Activated CD4-positive, alpha-beta memory T cell treated with anti-CD3 and anti-CD28 coated beads, Interleukin-2, amount 10 ng/mL, durations not matched to agents 7 days and 5 days (primary cell): ENCODE measurements at regions of chr9 and their contacts with region 1.

Region 1: GRCh38 chr9:127734747-127735529 is at the start of gene TOR2A:
- DNase-seq: peak; percentile 98
- H3K4me3 Mint-ChIP-seq: peak within 1 kb of the TSS; percentile 79
- H3K27ac Mint-ChIP-seq: peak within 1 kb of the TSS; percentile 82
- H3K4me1 Mint-ChIP-seq: peaks cover 23% of the 10 kb centered on the region
- H3K27me3 Mint-ChIP-seq: no peaks in the 10 kb centered on the region
- total RNA-seq, gene TOR2A: 20.6 to 23.3 TPM

Region 2: GRCh38 chr9:127525401-127526187 is 209.3 kb before region 1 on chr9:
- CTCF ChIA-PET with region 1: interaction called, 25 read pairs
- POLR2A ChIA-PET with region 1: interaction called, 7 read pairs
- DNase-seq: peak; percentile 40
- H3K4me3 Mint-ChIP-seq: no peak overlapping the region
- H3K27ac Mint-ChIP-seq: no peak overlapping the region
- H3K4me1 Mint-ChIP-seq: peaks cover 5% of the 10 kb centered on the region
- H3K27me3 Mint-ChIP-seq: no peaks in the 10 kb centered on the region

Region 3: GRCh38 chr9:127707726-127708147 is 27.2 kb before region 1 on chr9:
- CTCF ChIA-PET with region 1: interaction called, 22 read pairs
- POLR2A ChIA-PET with region 1: interaction called, 5 read pairs
- DNase-seq: peak; percentile 73
- H3K4me3 Mint-ChIP-seq: no peak overlapping the region
- H3K27ac Mint-ChIP-seq: peak overlapping the region; percentile 24
- H3K4me1 Mint-ChIP-seq: peaks cover 27% of the 10 kb centered on the region
- H3K27me3 Mint-ChIP-seq: no peaks in the 10 kb centered on the region

Region 4: DNA sequence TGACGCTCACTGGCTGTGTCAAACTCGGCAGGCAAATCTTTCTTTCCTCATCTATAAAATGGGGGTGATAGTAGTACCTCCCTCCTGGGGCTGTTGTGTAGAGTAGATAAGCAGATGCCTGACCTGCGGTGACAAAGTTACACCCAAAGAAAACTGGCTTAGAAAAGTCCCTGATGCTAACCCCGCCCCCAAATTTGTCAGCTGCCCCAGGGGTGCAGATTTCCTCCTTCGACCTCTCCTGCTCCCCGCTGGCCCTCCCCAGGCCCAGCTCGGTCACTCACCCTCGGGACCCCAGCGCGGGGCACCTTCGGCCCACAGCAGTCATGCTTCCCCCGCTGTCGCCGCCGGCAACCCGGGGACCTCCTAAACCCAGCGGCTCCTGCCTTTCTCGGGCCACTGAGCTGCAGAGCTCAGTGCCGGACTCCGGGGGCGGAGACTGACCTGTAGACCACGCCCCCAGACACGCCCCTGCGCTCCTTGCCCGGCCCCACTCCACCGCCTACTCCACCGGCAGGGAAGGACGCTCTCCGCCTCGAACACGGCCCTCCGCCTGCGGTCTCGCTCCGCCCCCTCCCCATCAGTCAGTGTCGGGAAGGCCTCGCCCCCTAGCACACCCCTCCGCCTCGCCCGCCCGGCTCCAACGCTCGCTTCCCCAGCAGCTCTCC is 36.1 kb after region 1 on chr9:
- CTCF ChIA-PET with region 1: interaction called, 25 read pairs
- POLR2A ChIA-PET with region 1: interaction called, 11 read pairs
- DNase-seq: peak; percentile 98
- H3K4me3 Mint-ChIP-seq: peak overlapping the region; percentile 86
- H3K27ac Mint-ChIP-seq: peak overlapping the region; percentile 89
- H3K4me1 Mint-ChIP-seq: peaks cover 81% of the 10 kb centered on the region
- H3K27me3 Mint-ChIP-seq: no peaks in the 10 kb centered on the region

Region 5: DNA sequence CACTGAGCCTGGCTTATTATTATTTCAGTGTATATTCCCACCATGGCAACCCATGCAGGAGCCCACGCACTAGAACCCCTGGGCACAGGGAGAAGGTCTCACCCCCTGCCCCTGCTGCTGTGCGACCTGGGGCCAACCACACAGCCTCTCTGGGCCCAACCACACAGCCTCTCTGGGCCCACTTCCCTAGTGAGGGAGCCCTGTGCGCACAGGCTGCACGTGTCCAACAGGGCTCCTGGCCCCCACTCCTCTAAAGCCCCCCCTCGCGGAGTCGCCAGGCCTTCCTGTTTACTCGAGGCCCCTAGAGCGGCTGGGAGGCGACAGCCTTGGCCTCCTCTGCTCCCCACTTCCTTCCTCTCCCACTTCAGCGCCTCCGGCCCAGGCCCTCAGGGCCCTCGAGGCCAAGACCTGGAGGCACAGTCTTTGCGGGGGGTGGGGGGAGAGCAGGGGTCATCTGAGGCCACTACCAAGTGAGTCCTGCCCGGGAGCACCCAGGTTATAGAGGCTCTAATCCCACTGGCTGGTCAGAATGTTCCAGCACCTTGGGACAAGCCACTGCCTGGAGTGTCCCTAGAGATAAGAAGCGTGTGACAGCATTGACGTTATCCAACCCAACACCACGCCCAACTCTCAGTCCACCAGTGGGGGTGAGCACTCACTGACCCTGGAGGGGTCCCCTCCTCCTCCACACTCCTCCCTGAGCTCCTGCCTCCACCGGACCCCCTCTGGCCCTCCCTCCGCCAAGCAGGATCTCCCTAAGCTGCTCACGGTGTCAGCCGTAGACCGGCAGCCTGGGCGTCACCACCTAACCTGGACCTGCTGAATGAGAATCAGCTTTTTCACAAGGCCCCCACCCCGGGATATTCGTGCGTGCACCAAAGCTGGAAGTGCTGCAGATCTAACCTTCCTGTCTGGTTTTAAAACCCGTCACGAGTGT is 127.4 kb after region 1 on chr9:
- CTCF ChIA-PET with region 1: interaction called, 18 read pairs
- POLR2A ChIA-PET with region 1: interaction called, 5 read pairs
- DNase-seq: peak; percentile 71
- H3K4me3 Mint-ChIP-seq: peak overlapping the region; percentile 18
- H3K27ac Mint-ChIP-seq: peak overlapping the region; percentile 85
- H3K4me1 Mint-ChIP-seq: peaks cover 41% of the 10 kb centered on the region
- H3K27me3 Mint-ChIP-seq: no peaks in the 10 kb centered on the region